ENCODE measurements at regions of chr7 and their contacts with region 1.

Region 1: GRCh38 chr7:38215735-38216670 is 38.0 kb downstream of the STARD3NL start:
- DNase-seq: peak; percentile 89
- ATAC-seq: peak; percentile 80
- H3K4me3 Mint-ChIP-seq: no peak overlapping the region
- H3K27ac Mint-ChIP-seq: peak overlapping the region; percentile 55
- H3K4me1 Mint-ChIP-seq: peaks cover 52% of the 10 kb centered on the region
- H3K27me3 Mint-ChIP-seq: no peaks in the 10 kb centered on the region

Region 2: GRCh38 chr7:38154278-38154677 is 61.7 kb before region 1 on chr7:
- CTCF ChIA-PET with region 1: no interaction called
- POLR2A ChIA-PET with region 1: no interaction called
- DNase-seq: no peak
- ATAC-seq: no peak
- H3K4me3 Mint-ChIP-seq: no peak overlapping the region
- H3K27ac Mint-ChIP-seq: no peak overlapping the region
- H3K4me1 Mint-ChIP-seq: no peaks in the 10 kb centered on the region
- H3K27me3 Mint-ChIP-seq: peaks cover 23% of the 10 kb centered on the region

Region 3: GRCh38 chr7:38179776-38180226 is 36.2 kb before region 1 on chr7:
- CTCF ChIA-PET with region 1: interaction called, 50 read pairs
- POLR2A ChIA-PET with region 1: no interaction called
- DNase-seq: no peak
- ATAC-seq: no peak
- H3K4me3 Mint-ChIP-seq: peak overlapping the region; percentile 93
- H3K27ac Mint-ChIP-seq: no peak overlapping the region
- H3K4me1 Mint-ChIP-seq: peaks cover 29% of the 10 kb centered on the region
- H3K27me3 Mint-ChIP-seq: no peaks in the 10 kb centered on the region

Region 4: GRCh38 chr7:38195804-38196595 is 20.0 kb before region 1 on chr7:
- CTCF ChIA-PET with region 1: interaction called, 62 read pairs
- POLR2A ChIA-PET with region 1: no interaction called
- DNase-seq: no peak
- ATAC-seq: no peak
- H3K4me3 Mint-ChIP-seq: no peak overlapping the region
- H3K27ac Mint-ChIP-seq: no peak overlapping the region
- H3K4me1 Mint-ChIP-seq: peaks cover 15% of the 10 kb centered on the region
- H3K27me3 Mint-ChIP-seq: no peaks in the 10 kb centered on the region

Region 5: DNA sequence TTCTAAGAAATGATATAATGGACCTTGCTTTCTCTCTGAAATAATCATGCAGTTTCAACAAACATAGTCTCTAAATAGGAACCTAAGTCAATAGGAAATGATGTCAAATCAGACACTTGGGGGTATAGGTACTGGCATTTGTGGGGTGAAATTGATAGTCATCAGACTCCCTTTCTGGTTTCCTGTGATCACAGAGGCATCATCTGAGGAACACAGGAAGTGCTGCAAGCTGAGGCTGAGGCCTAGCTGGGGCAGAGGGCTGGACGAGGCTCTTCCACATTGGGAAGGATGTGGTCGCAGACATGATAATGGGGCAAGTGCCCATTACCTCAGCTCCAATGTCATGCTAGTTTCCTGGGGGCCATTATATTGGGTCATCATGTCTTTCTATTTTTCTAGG is 90.9 kb after region 1 on chr7:
- CTCF ChIA-PET with region 1: interaction called, 10 read pairs
- POLR2A ChIA-PET with region 1: no interaction called
- DNase-seq: peak; percentile 56
- ATAC-seq: peak; percentile 54
- H3K4me3 Mint-ChIP-seq: peak overlapping the region; percentile 60
- H3K27ac Mint-ChIP-seq: peak overlapping the region; percentile 92
- H3K4me1 Mint-ChIP-seq: peaks cover 59% of the 10 kb centered on the region
- H3K27me3 Mint-ChIP-seq: no peaks in the 10 kb centered on the region

Region 6: DNA sequence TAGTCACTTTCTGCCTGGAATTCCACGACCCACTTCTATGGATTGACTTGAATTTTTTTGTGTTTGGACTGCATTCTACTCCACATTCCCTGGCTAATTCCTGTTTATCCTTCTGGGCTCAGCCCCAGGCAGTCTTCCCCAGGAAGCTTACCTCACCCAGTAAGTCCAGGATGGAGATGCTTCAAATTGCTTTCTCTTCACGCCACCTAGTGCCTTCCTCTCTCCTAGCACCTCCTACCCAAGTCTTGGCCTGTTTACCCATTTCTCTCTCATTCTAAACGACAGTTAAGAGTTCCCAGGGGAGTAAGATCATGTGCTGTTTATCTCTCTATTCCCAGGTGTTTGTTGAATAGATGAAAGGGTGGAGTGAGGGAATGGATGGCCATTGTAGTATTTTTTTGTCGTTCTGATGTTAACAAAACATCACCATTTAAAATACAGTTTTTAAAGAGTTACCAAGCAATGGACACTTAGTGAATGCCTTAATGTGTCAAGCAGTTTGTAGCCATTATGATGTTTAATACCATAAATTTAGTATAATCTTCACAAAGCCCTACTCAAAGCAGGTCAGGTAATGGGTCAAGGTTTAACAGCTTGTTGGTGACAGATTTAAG is 102.9 kb after region 1 on chr7:
- CTCF ChIA-PET with region 1: interaction called, 116 read pairs
- POLR2A ChIA-PET with region 1: no interaction called
- DNase-seq: no peak
- ATAC-seq: peak; percentile 56
- H3K4me3 Mint-ChIP-seq: peak overlapping the region; percentile 71
- H3K27ac Mint-ChIP-seq: peak overlapping the region; percentile 76
- H3K4me1 Mint-ChIP-seq: peaks cover 55% of the 10 kb centered on the region
- H3K27me3 Mint-ChIP-seq: no peaks in the 10 kb centered on the region

Region 7: GRCh38 chr7:38335492-38336147 is 119.6 kb after region 1 on chr7:
- CTCF ChIA-PET with region 1: interaction called, 318 read pairs
- POLR2A ChIA-PET with region 1: interaction called, 13 read pairs
- DNase-seq: peak; percentile 90
- ATAC-seq: peak; percentile 89
- H3K4me3 Mint-ChIP-seq: peak overlapping the region; percentile 84
- H3K27ac Mint-ChIP-seq: peak overlapping the region; percentile 83
- H3K4me1 Mint-ChIP-seq: peaks cover 58% of the 10 kb centered on the region
- H3K27me3 Mint-ChIP-seq: no peaks in the 10 kb centered on the region

Region 8: GRCh38 chr7:38360776-38361175 is 144.8 kb after region 1 on chr7:
- CTCF ChIA-PET with region 1: interaction called, 346 read pairs
- POLR2A ChIA-PET with region 1: interaction called, 4 read pairs
- DNase-seq: no peak
- ATAC-seq: no peak
- H3K4me3 Mint-ChIP-seq: peak overlapping the region; percentile 91
- H3K27ac Mint-ChIP-seq: peak overlapping the region; percentile 28
- H3K4me1 Mint-ChIP-seq: peaks cover 63% of the 10 kb centered on the region
- H3K27me3 Mint-ChIP-seq: no peaks in the 10 kb centered on the region